WTC11 (cell line): ENCODE measurements at regions of chr3 and their contacts with region 1.

Region 1: GRCh38 chr3:146189519-146190173 is 28.7 kb upstream of the PLOD2 start:
- DNase-seq: no peak
- ATAC-seq: peak; percentile 93
- H3K4me3 Mint-ChIP-seq: no peak overlapping the region
- H3K27ac Mint-ChIP-seq: no peak overlapping the region
- H3K4me1 Mint-ChIP-seq: no peaks in the 10 kb centered on the region; the same call in 1 of the 2 replicates
- H3K27me3 Mint-ChIP-seq: no peaks in the 10 kb centered on the region
- CTCF ChIP-seq: peak; percentile 79

Region 2: GRCh38 chr3:145776782-145777408 is 412.8 kb before region 1 on chr3:
- CTCF ChIA-PET with region 1: interaction called, 12 read pairs
- POLR2A ChIA-PET with region 1: no interaction called
- DNase-seq: peak; percentile 42
- ATAC-seq: peak; percentile 79
- H3K4me3 Mint-ChIP-seq: no peak overlapping the region
- H3K27ac Mint-ChIP-seq: no peak overlapping the region
- H3K4me1 Mint-ChIP-seq: no peaks in the 10 kb centered on the region
- H3K27me3 Mint-ChIP-seq: no peaks in the 10 kb centered on the region
- CTCF ChIP-seq: peak; percentile 72

Region 3: GRCh38 chr3:146156095-146156494 is 33.6 kb before region 1 on chr3:
- CTCF ChIA-PET with region 1: interaction called, 12 read pairs
- POLR2A ChIA-PET with region 1: no interaction called
- DNase-seq: no peak
- ATAC-seq: no peak
- H3K4me3 Mint-ChIP-seq: no peak overlapping the region
- H3K27ac Mint-ChIP-seq: peak overlapping the region; percentile 80
- H3K4me1 Mint-ChIP-seq: peaks cover 66% of the 10 kb centered on the region
- H3K27me3 Mint-ChIP-seq: no peaks in the 10 kb centered on the region
- CTCF ChIP-seq: no peak

Region 4: DNA sequence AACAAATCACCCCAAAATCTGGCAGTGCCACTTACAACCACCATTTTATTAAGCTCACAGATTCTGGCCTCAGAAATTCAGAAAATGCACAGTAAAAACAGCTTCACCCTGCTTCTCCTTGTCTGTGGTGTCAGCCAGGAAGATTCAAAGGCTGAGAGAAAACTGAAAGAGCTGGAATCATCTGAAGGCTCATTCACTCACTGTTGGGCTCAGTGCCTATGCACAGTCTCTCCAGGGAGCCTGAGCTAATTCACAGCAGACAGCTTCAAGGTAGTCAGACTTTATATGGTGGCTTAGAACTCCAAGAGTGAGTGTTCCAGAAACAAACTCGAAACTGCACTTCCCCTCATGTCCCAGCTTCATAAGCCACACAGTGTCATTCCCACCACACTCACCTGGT is 12.1 kb before region 1 on chr3:
- CTCF ChIA-PET with region 1: interaction called, 12 read pairs
- POLR2A ChIA-PET with region 1: no interaction called
- DNase-seq: no peak
- ATAC-seq: no peak
- H3K4me3 Mint-ChIP-seq: no peak overlapping the region
- H3K27ac Mint-ChIP-seq: no peak overlapping the region
- H3K4me1 Mint-ChIP-seq: peaks cover 11% of the 10 kb centered on the region
- H3K27me3 Mint-ChIP-seq: no peaks in the 10 kb centered on the region
- CTCF ChIP-seq: no peak

Region 5: GRCh38 chr3:146382386-146382785 is 192.7 kb after region 1 on chr3:
- CTCF ChIA-PET with region 1: interaction called, 20 read pairs
- POLR2A ChIA-PET with region 1: no interaction called
- DNase-seq: peak; percentile 20
- ATAC-seq: peak; percentile 76
- H3K4me3 Mint-ChIP-seq: no peak overlapping the region
- H3K27ac Mint-ChIP-seq: no peak overlapping the region
- H3K4me1 Mint-ChIP-seq: peaks cover 17% of the 10 kb centered on the region
- H3K27me3 Mint-ChIP-seq: no peaks in the 10 kb centered on the region
- CTCF ChIP-seq: no peak

Region 6: GRCh38 chr3:146640955-146641867 is 451.6 kb after region 1 on chr3:
- CTCF ChIA-PET with region 1: interaction called, 15 read pairs
- POLR2A ChIA-PET with region 1: no interaction called
- DNase-seq: no peak
- ATAC-seq: peak; percentile 82
- H3K4me3 Mint-ChIP-seq: no peak overlapping the region
- H3K27ac Mint-ChIP-seq: no peak overlapping the region
- H3K4me1 Mint-ChIP-seq: peaks cover 16% of the 10 kb centered on the region
- H3K27me3 Mint-ChIP-seq: no peaks in the 10 kb centered on the region
- CTCF ChIP-seq: peak; percentile 61